ENCODE measurements at regions of chr1 and their contacts with region 1.

Region 1: GRCh38 chr1:76901158-76901767 is 34.0 kb downstream of the ST6GALNAC5 start:
- DNase-seq: peak in 6 of 9 donors; percentile 4 to 41 (median 30)
- ATAC-seq: peak; percentile 53
- H3K4me3 ChIP-seq: no peak overlapping the region
- H3K4me3 Mint-ChIP-seq: no peak overlapping the region
- H3K27ac ChIP-seq: no peak overlapping the region
- H3K27ac Mint-ChIP-seq: no peak overlapping the region
- H3K4me1 ChIP-seq: no peaks in the 10 kb centered on the region
- H3K4me1 Mint-ChIP-seq: no peaks in the 10 kb centered on the region
- H3K27me3 ChIP-seq: no peaks in the 10 kb centered on the region
- H3K27me3 Mint-ChIP-seq: peaks cover 0 to 7% (median 0%) of the 10 kb centered on the region in 5 donors

Region 2: DNA sequence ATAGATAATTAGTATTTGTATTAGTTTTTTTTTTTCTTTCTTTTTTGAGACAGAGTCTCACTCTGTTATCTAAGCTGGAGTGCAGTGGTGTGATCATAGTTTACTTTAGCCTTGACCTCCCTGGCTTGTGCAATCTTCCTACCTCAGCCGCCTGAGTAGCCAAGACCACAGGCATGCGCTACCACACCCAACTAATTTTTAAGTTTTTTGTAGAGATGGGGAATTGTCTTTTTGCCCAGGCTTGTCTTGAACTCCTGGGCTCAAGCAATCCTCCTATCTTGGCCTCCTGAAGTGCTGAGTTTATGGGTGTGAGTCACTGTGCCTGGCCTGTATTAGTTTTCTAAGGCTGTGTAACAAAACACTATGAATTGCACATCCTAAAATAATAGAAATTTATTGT is 1046.3 kb before region 1 on chr1:
- CTCF ChIA-PET with region 1: no interaction called
- POLR2A ChIA-PET with region 1: no interaction called
- intact Hi-C with region 1: no loop called
- DNase-seq: no peak
- ATAC-seq: no peak
- H3K4me3 ChIP-seq: no peak overlapping the region
- H3K4me3 Mint-ChIP-seq: no peak overlapping the region
- H3K27ac ChIP-seq: no peak overlapping the region
- H3K27ac Mint-ChIP-seq: no peak overlapping the region
- H3K4me1 ChIP-seq: no peaks in the 10 kb centered on the region
- H3K4me1 Mint-ChIP-seq: no peaks in the 10 kb centered on the region
- H3K27me3 ChIP-seq: no peaks in the 10 kb centered on the region
- H3K27me3 Mint-ChIP-seq: peaks cover 0 to 5% (median 0%) of the 10 kb centered on the region in 5 donors

Region 3: DNA sequence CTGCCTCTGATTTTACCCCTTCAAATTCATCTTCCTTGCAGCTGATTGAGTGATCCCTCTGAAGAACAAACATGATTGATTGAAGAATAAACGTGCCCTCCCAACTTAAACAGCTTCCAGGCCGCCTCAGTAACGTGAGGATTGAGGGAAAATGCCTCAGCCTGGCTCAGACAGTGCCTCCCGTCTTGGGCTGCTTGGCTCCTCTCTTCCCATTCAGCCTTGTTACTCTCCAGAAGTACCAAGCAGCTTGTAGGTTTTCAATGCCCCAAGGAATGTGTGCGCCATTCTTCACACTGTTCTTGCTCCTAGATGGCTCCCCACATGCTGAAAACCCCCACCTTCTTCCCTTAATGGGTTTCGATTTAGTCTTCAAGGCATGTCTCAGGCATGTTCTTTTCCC is 17.8 kb after region 1 on chr1:
- CTCF ChIA-PET with region 1: no interaction called
- POLR2A ChIA-PET with region 1: no interaction called
- intact Hi-C with region 1: no loop called
- DNase-seq: no peak
- ATAC-seq: no peak
- H3K4me3 ChIP-seq: no peak overlapping the region
- H3K4me3 Mint-ChIP-seq: no peak overlapping the region
- H3K27ac ChIP-seq: no peak overlapping the region
- H3K27ac Mint-ChIP-seq: no peak overlapping the region
- H3K4me1 ChIP-seq: no peaks in the 10 kb centered on the region
- H3K4me1 Mint-ChIP-seq: no peaks in the 10 kb centered on the region
- H3K27me3 ChIP-seq: no peaks in the 10 kb centered on the region
- H3K27me3 Mint-ChIP-seq: peaks cover 0 to 18% (median 5%) of the 10 kb centered on the region in 5 donors

Region 4: GRCh38 chr1:76949503-76949902 is 48.2 kb after region 1 on chr1:
- CTCF ChIA-PET with region 1: no interaction called
- POLR2A ChIA-PET with region 1: no interaction called
- intact Hi-C with region 1: no loop called
- DNase-seq: no peak
- ATAC-seq: no peak
- H3K4me3 ChIP-seq: no peak overlapping the region
- H3K4me3 Mint-ChIP-seq: no peak overlapping the region
- H3K27ac ChIP-seq: no peak overlapping the region
- H3K27ac Mint-ChIP-seq: no peak overlapping the region
- H3K4me1 ChIP-seq: no peaks in the 10 kb centered on the region
- H3K4me1 Mint-ChIP-seq: no peaks in the 10 kb centered on the region
- H3K27me3 ChIP-seq: no peaks in the 10 kb centered on the region
- H3K27me3 Mint-ChIP-seq: no peaks in the 10 kb centered on the region

Region 5: DNA sequence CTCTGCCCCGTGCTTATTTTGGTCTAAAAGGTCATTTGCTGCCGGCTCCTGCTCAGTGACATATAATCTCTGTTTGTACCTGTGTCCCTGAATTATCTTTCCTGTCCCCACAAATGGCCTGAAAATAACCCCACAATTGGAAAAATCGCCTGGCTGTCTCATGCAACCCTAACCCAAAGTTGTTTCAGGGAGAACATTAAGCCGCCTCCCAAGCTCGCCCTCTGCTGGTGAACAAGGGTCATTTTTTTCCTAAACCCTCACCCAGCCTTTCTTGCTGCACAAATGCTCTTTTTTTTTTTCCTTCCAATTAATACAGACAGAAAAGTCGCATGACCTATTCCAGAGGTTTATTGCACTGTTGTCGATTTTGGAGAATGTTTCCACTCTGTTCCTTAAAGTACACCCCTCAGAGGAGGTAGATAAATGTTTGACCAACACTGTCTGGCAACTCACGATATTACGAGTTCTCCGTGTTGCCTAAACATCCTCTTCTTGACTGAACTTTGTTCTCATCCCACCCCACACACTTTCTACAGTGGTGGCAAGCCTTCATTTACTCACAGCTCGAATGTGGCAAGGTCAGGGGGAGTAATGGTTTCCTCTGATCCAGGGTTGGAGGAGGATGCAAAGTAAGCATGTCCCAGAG is 632.5 kb after region 1 on chr1:
- CTCF ChIA-PET with region 1: no interaction called
- POLR2A ChIA-PET with region 1: no interaction called
- intact Hi-C with region 1: loop called (anchors 1 kb)
- DNase-seq: peak; percentile 34 to 75 (median 60)
- ATAC-seq: peak; percentile 71
- H3K4me3 ChIP-seq: no peak overlapping the region
- H3K4me3 Mint-ChIP-seq: peak overlapping the region in 6 of 10 donors; percentile 22 to 69 (median 50)
- H3K27ac ChIP-seq: no peak overlapping the region
- H3K27ac Mint-ChIP-seq: peak overlapping the region in 8 of 9 donors; percentile 16 to 94 (median 38)
- H3K4me1 ChIP-seq: peaks cover 0 to 4% of the 10 kb centered on the region in 2 donors
- H3K4me1 Mint-ChIP-seq: peaks cover 2 to 16% (median 10%) of the 10 kb centered on the region in 7 donors
- H3K27me3 ChIP-seq: no peaks in the 10 kb centered on the region
- H3K27me3 Mint-ChIP-seq: no peaks in the 10 kb centered on the region

Measured in naive thymus-derived CD4-positive, alpha-beta T cell (primary cell).